ENCODE measurements at regions of chr3 and their contacts with region 1.

Region 1: GRCh38 chr3:98602078-98602678 is 8.8 kb upstream of the CPOX start:
- DNase-seq: peak; percentile 76
- H3K4me3 ChIP-seq: no peak overlapping the region
- H3K27ac ChIP-seq: no peak overlapping the region
- H3K4me1 ChIP-seq: no peaks in the 10 kb centered on the region
- H3K27me3 ChIP-seq: no peaks in the 10 kb centered on the region
- CTCF ChIP-seq: peak; percentile 60 to 74
- POLR2A ChIP-seq: no peak

Region 2: GRCh38 chr3:98540346-98540745 is 61.8 kb before region 1 on chr3:
- CTCF ChIA-PET with region 1: no interaction called
- POLR2A ChIA-PET with region 1: no interaction called
- dilution Hi-C with region 1: no loop called
- intact Hi-C with region 1: no loop called
- DNase-seq: no peak
- H3K4me3 ChIP-seq: no peak overlapping the region
- H3K27ac ChIP-seq: no peak overlapping the region
- H3K4me1 ChIP-seq: no peaks in the 10 kb centered on the region
- H3K27me3 ChIP-seq: peaks cover 8 to 14% of the 10 kb centered on the region in 2 experiments
- CTCF ChIP-seq: no peak
- POLR2A ChIP-seq: no peak

Region 3: GRCh38 chr3:98588065-98588464 is 14.1 kb before region 1 on chr3:
- CTCF ChIA-PET with region 1: interaction called, 17 read pairs
- POLR2A ChIA-PET with region 1: no interaction called
- dilution Hi-C with region 1: no loop called
- intact Hi-C with region 1: no loop called
- DNase-seq: no peak
- H3K4me3 ChIP-seq: no peak overlapping the region
- H3K27ac ChIP-seq: no peak overlapping the region
- H3K4me1 ChIP-seq: peaks cover 10% of the 10 kb centered on the region
- H3K27me3 ChIP-seq: no peaks in the 10 kb centered on the region
- CTCF ChIP-seq: peak; percentile 8 to 15
- POLR2A ChIP-seq: no peak

Region 4: GRCh38 chr3:98732286-98733052 is 130.3 kb after region 1 on chr3:
- CTCF ChIA-PET with region 1: interaction called, 37 read pairs
- POLR2A ChIA-PET with region 1: no interaction called
- dilution Hi-C with region 1: no loop called
- intact Hi-C with region 1: loop called (anchors 2 kb)
- DNase-seq: peak; percentile 59
- H3K4me3 ChIP-seq: peak overlapping the region; percentile 45 to 96 (median 86)
- H3K27ac ChIP-seq: peak overlapping the region; percentile 92
- H3K4me1 ChIP-seq: peaks cover 45% of the 10 kb centered on the region
- H3K27me3 ChIP-seq: no peaks in the 10 kb centered on the region
- CTCF ChIP-seq: no peak
- POLR2A ChIP-seq: peak; percentile 55

Region 5: DNA sequence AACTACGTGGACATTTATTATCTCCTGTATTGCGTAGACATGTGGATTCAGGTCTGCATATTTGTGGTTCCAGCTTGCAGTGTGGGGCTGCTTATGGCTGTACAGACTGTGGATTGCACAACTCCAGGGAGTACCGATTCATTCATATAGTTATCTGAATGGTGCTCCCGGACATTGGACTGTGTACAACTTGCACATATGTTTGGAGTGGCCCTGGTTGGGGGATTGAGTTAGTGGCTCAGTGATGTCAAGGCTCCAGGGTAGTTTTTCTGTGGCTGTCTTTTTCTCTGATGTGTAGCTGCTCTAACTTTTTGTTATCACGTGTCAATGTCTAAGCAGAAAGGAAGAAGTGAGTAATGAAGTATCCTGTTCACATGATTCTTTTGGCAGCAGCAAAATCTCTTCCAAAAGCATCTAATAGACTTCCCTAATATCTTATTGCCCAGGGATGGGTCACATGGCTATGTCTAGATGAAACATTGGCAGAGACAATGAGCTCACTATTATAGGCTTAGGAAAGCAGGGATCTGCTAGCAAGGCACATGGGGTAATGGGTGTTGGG is 176.8 kb after region 1 on chr3:
- CTCF ChIA-PET with region 1: interaction called, 35 read pairs
- POLR2A ChIA-PET with region 1: interaction called, 3 read pairs
- dilution Hi-C with region 1: no loop called
- intact Hi-C with region 1: no loop called
- DNase-seq: peak; percentile 97
- H3K4me3 ChIP-seq: peak overlapping the region in 1 of 3 experiments; percentile 9
- H3K27ac ChIP-seq: peak overlapping the region; percentile 98
- H3K4me1 ChIP-seq: peaks cover 42% of the 10 kb centered on the region
- H3K27me3 ChIP-seq: no peaks in the 10 kb centered on the region
- CTCF ChIP-seq: no peak
- POLR2A ChIP-seq: no peak

Region 6: DNA sequence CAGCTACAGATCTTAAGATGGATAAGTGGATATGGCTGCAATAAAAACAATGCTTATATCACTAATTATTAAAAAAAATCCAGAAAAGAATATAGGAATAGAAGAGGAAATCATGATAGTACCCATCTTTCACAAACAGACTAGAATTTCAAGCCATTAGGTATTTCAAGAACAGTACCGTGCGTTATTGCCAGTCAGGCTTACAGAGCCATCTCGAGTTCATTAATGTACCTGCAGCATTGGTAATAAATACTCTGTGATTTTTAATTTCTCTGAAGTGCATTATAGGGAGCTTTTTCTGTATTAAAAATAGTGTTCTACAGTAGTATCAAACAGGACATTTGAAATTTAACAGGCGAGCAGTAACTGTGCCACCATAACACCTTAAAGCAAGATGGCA is 196.6 kb after region 1 on chr3:
- CTCF ChIA-PET with region 1: interaction called, 63 read pairs
- POLR2A ChIA-PET with region 1: no interaction called
- dilution Hi-C with region 1: loop called (anchors 25 kb)
- intact Hi-C with region 1: loop called (anchors 5 kb)
- DNase-seq: no peak
- H3K4me3 ChIP-seq: no peak overlapping the region
- H3K27ac ChIP-seq: no peak overlapping the region
- H3K4me1 ChIP-seq: no peaks in the 10 kb centered on the region
- H3K27me3 ChIP-seq: no peaks in the 10 kb centered on the region
- CTCF ChIP-seq: no peak
- POLR2A ChIP-seq: no peak

Region 7: GRCh38 chr3:98817547-98818041 is 215.4 kb after region 1 on chr3:
- CTCF ChIA-PET with region 1: interaction called, 202 read pairs
- POLR2A ChIA-PET with region 1: no interaction called
- dilution Hi-C with region 1: loop called (anchors 25 kb)
- intact Hi-C with region 1: loop called (anchors 1 kb)
- DNase-seq: peak; percentile 66
- H3K4me3 ChIP-seq: no peak overlapping the region
- H3K27ac ChIP-seq: peak overlapping the region; percentile 34
- H3K4me1 ChIP-seq: peaks cover 8% of the 10 kb centered on the region
- H3K27me3 ChIP-seq: no peaks in the 10 kb centered on the region
- CTCF ChIP-seq: peak; percentile 27 to 34
- POLR2A ChIP-seq: no peak

Measured in endothelial cell of umbilical vein (primary cell).